ENCODE measurements at regions of chr11 and their contacts with region 1.

Region 1: DNA sequence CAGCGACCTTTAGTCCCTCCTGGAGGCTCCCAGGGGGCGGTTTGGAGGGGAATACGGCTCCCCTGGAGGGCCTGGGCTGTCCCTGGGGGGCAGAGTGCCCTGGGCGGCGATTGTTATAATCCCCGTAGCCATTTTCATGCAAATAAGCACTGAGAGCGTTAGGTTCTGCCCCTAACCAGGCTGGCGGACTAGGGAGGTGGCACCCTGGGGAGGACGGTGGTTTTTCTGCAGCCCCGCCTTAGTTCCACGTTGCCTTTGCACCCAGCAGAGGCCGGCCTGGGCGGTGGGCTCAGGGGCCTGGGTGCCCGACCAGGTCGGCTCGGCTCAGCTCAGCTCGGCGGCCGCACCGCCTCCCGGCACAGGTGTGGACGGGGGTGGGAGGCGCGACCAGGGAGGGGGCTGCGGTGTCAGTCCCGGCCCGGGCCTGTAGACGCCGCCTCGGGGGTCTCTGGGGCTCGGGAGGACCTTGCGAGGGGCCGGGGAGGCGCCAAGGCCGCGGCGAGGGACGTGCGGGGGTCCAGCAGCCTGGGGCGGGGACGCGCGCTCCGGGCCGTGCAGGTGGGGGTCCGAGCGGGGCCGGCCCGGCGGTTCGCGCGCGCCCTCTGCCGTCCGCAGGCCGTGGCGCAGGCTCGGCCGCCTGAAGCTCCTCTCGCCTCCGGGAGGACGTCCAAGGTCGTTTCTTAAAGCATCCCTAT is 2.3 kb upstream of the DUSP8 start:
- DNase-seq: peak in 7 of 10 donors; percentile 67 to 96 (median 72)

Region 2: GRCh38 chr11:1546536-1547400 is 27.6 kb before region 1 on chr11:
- intact Hi-C with region 1: loop called (anchors 1 kb)
- DNase-seq: peak in 6 of 10 donors; percentile 52 to 94 (median 63)